ENCODE measurements at regions of chr19 and their contacts with region 1.

Region 1: DNA sequence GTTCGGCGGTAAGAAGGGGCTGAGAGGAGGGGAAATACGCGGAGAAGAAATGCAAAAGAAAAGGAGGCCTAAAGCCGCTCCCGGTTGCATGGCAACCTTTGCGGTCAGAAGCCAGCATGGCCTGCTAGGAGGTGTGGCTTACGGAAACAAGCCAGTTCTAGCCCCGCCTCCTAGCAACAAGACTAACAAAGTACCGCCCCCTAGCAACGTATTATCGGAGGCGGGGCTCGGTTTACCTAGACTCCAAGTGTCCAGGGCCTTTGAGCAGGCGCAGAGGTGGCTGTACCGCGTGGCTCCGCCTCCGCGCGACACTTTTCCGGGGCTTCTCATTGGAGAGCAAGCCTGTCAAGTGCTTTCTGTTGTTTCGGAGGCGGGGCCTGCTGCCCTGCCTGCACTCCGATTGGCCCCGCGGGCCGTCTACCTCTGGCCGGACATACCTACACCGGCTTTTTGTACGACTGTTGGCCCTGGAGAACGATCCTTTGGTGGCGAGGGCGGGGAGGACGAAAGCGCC is 337 bp upstream of the CYTH2 start:
- DNase-seq: peak; percentile 99
- ATAC-seq: peak; percentile 93
- H3K4me3 Mint-ChIP-seq: peak overlapping the region; percentile 86
- H3K27ac Mint-ChIP-seq: peak overlapping the region; percentile 85
- H3K4me1 Mint-ChIP-seq: peaks cover 23% of the 10 kb centered on the region
- H3K27me3 Mint-ChIP-seq: no peaks in the 10 kb centered on the region

Region 2: DNA sequence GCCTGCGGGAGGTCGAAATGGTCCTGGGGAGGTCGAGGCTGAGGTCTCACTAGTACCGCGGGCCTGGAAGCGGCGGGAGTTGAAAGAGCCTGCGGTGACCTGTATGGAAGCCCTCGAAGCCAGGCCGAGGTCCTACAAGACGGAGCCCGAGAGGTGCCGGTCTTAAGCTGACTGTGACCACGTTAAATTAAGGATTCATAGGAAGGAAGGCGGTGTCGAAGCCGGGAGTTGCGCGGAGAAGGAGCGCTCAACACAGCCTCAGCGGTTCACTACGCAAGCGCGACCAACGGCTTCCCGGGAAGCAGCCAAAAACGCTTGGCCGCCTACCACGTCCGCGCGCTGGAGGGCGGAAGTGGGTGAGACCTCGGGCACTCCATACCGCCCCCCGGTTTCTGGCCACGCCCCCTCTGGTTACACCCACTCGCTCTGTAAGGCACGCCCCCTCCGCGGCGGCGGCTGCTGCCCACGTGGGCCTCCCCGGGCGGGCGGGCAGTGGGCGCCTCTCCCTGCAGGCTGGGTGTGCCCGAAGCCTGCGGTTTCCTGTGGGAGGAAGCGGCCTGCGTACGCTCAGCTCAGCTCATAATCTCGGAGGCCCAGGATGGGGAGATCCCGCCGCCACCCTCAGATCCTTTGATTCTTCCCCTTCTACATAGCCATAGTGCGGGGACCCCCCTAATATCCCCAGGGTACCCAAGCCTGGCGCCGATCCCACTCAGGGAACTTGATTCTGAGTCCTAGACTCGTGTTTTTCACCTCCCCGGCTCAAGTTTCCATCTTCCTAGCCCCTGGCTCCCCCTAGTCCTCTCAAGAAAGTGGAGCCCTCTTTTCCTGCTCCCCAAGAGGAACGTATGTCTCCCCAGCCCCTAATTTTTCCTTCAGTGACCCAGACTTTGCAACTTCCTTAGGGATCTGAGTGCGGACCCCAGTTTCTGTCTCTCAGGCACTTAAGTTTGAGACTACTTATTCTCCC is 146.9 kb before region 1 on chr19:
- CTCF ChIA-PET with region 1: no interaction called
- POLR2A ChIA-PET with region 1: no interaction called
- intact Hi-C with region 1: loop called (anchors 1 to 5 kb)
- DNase-seq: peak; percentile 99
- ATAC-seq: peak; percentile 68
- H3K4me3 Mint-ChIP-seq: peak overlapping the region; percentile 82
- H3K27ac Mint-ChIP-seq: peak overlapping the region; percentile 97
- H3K4me1 Mint-ChIP-seq: peaks cover 56% of the 10 kb centered on the region
- H3K27me3 Mint-ChIP-seq: no peaks in the 10 kb centered on the region

Region 3: DNA sequence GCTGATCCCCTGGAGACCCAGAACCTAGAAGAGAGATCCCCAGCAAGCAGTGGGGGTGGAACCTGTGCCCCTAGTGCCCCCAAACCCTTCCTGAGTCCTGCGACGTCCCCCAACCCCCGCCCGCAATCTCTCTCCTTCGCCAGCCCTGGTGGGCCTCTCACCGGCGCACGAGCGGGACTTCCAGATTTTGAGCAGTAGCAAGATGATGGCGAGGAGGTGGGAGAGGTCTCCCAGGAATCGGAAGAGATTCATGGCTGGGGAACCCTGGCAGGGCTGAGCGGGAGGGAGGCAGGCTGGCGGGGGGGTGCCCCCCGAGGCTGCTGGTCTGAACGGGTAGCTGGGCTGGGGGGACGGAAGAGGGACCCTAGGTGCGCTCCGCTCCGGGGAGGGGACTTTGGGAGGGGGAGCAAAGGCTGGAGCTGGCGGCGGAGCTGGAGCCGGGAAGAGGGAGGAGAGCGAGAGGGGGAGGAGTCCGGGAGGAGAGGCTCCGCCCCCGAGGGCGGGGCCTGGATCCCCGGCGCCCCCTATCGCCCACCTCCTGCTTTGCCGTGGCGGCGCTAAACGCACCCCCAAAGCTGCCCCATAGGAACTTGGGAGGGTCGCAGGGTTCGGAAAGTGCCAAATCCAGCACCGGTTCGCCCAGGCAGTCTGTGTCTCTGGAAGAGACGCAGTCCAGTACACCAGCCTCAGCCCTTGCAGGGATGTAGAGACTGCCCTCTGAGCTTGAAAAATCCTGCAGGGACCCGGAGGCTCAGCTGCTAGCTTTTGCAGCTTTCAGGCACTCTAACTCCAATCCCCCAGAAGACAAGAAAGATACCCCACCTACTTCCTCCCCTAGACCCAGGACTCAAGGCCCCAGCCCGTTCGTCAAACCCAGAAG is 77.5 kb before region 1 on chr19 and contains the start of gene KDELR1:
- CTCF ChIA-PET with region 1: no interaction called
- POLR2A ChIA-PET with region 1: no interaction called
- intact Hi-C with region 1: loop called in 1 of 2 experiments (anchors 1 kb)
- DNase-seq: peak; percentile 85
- ATAC-seq: peak; percentile 82
- H3K4me3 Mint-ChIP-seq: peak within 1 kb of the TSS; percentile 92
- H3K27ac Mint-ChIP-seq: peak within 1 kb of the TSS; percentile 93
- H3K4me1 Mint-ChIP-seq: peaks cover 17% of the 10 kb centered on the region
- H3K27me3 Mint-ChIP-seq: peaks cover 19% of the 10 kb centered on the region
- total RNA-seq, gene KDELR1: 69.5 to 78.8 TPM

Region 4: GRCh38 chr19:48445606-48446481 is 23.0 kb before region 1 on chr19 and contains the start of gene GRWD1:
- CTCF ChIA-PET with region 1: interaction called, 3 read pairs
- POLR2A ChIA-PET with region 1: no interaction called
- intact Hi-C with region 1: loop called (anchors 1 kb)
- DNase-seq: peak; percentile 97
- ATAC-seq: peak; percentile 98
- H3K4me3 Mint-ChIP-seq: peak within 1 kb of the TSS; percentile 86
- H3K27ac Mint-ChIP-seq: peak within 1 kb of the TSS; percentile 89
- H3K4me1 Mint-ChIP-seq: peaks cover 37% of the 10 kb centered on the region
- H3K27me3 Mint-ChIP-seq: peaks cover 20% of the 10 kb centered on the region
- total RNA-seq, gene GRWD1: 43.4 to 51.3 TPM

Region 5: GRCh38 chr19:48501496-48502350 is 32.9 kb after region 1 on chr19:
- CTCF ChIA-PET with region 1: no interaction called
- POLR2A ChIA-PET with region 1: no interaction called
- intact Hi-C with region 1: loop called in 1 of 2 experiments (anchors 2 kb)
- DNase-seq: peak; percentile 86
- ATAC-seq: peak; percentile 76
- H3K4me3 Mint-ChIP-seq: peak overlapping the region; percentile 45
- H3K27ac Mint-ChIP-seq: peak overlapping the region; percentile 44
- H3K4me1 Mint-ChIP-seq: peaks cover 18% of the 10 kb centered on the region
- H3K27me3 Mint-ChIP-seq: peaks cover 16% of the 10 kb centered on the region

Region 6: DNA sequence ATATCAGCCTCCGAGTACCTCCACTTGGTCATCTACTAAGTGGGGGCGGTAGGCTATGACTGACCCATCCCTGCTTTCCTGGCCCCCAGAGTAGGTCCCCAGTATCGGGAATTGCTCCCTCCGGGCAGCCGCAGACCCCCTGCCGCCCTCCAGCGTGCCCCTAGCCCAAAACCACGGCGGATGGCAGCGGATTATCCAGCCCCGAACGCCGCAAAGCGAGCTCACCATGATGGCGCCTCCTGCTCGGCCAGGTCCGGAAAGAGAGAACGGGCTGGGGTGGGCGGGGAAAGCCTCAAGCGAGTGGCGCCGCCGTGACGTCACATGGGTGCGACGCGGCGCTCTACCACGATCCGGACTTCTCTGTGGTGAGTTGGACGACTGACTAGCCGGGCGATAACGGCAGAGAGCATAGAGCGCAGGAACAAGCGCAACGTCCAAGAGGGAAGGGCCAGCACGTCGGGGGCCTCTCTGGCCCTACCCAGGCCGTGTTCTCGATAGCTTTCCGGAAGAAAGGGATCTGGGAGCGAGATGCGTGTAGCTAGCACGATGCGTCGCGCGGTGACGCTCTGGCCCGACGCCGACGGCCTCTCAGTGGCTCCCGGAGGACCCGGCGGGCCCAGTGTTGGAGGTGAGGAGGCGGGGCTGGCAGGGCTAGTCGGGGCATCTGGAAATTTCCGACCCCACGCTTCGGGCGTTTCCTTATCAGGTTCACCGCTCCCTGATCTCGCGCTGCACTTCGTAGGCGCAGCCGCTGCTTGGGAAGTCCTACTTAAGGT is 150.3 kb after region 1 on chr19 and contains the starts of genes RPL18 and SPHK2:
- CTCF ChIA-PET with region 1: no interaction called
- POLR2A ChIA-PET with region 1: no interaction called
- intact Hi-C with region 1: loop called in 1 of 2 experiments (anchors 1 kb)
- DNase-seq: peak; percentile 97
- ATAC-seq: peak; percentile 82
- H3K4me3 Mint-ChIP-seq: peak within 1 kb of the TSS; percentile 94
- H3K27ac Mint-ChIP-seq: peak within 1 kb of the TSS; percentile 97
- H3K4me1 Mint-ChIP-seq: peaks cover 48% of the 10 kb centered on the region
- H3K27me3 Mint-ChIP-seq: no peaks in the 10 kb centered on the region
- total RNA-seq, gene RPL18: 2,026 to 2,191 TPM
- total RNA-seq, gene SPHK2: 27.0 TPM

Region 7: GRCh38 chr19:48965040-48965805 is 496.4 kb after region 1 on chr19 and contains the start of gene FTL:
- CTCF ChIA-PET with region 1: no interaction called
- POLR2A ChIA-PET with region 1: no interaction called
- intact Hi-C with region 1: loop called in 1 of 2 experiments (anchors 1 kb)
- DNase-seq: peak; percentile 95
- ATAC-seq: peak; percentile 79
- H3K4me3 Mint-ChIP-seq: peak within 1 kb of the TSS; percentile 86
- H3K27ac Mint-ChIP-seq: peak within 1 kb of the TSS; percentile 90
- H3K4me1 Mint-ChIP-seq: peaks cover 53% of the 10 kb centered on the region
- H3K27me3 Mint-ChIP-seq: no peaks in the 10 kb centered on the region
- total RNA-seq, gene FTL: 809 to 1,111 TPM